WTC11 (cell line): ENCODE measurements at regions of chr22 and their contacts with region 1.

Region 1: DNA sequence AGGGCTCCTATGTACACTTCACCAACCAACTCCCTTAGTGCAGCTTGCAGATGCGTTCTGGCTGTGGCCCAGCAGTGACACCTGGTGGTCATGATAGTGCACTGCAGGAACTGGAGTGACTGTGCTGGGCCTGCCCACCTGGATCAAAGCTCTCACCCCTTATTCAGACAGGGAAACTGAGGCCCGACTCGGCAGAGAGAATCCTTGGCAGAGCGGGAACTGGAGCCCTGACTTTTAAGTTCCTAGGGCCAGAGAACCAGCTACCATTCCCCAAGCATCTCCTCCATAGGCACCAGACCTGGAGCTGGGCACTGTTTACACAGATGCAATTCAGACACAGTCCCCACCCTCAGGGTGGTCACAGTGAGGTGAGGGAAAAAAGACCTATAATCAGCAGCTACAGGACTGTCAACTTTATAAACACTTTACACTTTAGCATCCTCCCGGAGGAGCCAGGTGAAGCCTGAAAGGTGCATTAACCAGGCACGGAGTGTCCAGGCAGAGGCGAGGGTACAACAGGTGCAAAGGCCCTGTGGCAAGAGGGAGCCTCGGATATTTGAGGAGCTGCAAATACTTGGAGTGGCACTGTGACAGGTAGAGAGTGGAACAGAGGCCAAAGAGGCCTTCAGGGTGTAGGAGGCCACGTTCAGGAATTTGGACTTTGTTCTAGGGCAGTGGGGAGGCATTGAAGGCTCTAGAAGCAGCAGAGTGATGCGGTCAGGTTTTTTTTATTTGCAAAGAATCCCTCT is 22.0 kb downstream of the RHBDD3 start:
- DNase-seq: peak; percentile 80
- ATAC-seq: peak; percentile 95
- H3K4me3 Mint-ChIP-seq: no peak overlapping the region
- H3K27ac Mint-ChIP-seq: no peak overlapping the region
- H3K4me1 Mint-ChIP-seq: no peaks in the 10 kb centered on the region
- H3K27me3 Mint-ChIP-seq: peaks cover 16% of the 10 kb centered on the region
- CTCF ChIP-seq: peak; percentile 99

Region 2: DNA sequence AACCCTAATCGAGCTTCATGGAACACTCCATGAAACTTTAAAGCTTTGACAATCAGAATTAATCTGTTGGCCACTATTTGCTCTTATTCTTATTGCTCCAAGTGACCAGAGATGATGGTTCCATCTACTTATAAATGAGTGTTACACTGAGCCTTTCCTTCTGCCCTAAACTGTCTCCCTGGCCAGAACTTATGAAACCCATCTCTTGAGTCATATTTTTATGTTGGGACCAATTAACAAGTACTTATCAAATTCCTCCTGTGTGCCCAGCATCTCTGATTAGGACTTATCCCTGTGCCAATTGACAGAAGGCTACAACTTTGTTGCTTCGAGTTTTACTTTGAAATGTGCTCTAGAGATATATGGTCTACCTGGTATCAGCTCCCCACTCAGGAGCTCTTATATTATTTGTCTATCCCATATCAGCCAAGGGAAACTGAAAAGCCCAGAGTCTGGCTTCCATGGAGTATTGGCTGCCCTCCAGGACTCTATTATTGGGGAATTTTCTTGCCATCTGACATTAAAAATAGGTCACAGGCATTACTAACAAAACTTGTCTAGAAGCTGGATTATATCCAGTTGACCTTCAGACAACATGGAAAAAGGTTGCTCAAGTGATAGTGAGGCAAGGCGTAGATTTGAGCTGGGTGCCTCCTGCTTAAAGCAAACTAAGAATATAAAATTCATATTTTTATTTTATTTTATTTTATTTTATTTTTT is 164.1 kb before region 1 on chr22:
- CTCF ChIA-PET with region 1: interaction called, 18 read pairs
- POLR2A ChIA-PET with region 1: no interaction called
- DNase-seq: no peak
- ATAC-seq: no peak
- H3K4me3 Mint-ChIP-seq: no peak overlapping the region
- H3K27ac Mint-ChIP-seq: no peak overlapping the region
- H3K4me1 Mint-ChIP-seq: peaks cover 32% of the 10 kb centered on the region
- H3K27me3 Mint-ChIP-seq: no peaks in the 10 kb centered on the region
- CTCF ChIP-seq: no peak

Region 3: DNA sequence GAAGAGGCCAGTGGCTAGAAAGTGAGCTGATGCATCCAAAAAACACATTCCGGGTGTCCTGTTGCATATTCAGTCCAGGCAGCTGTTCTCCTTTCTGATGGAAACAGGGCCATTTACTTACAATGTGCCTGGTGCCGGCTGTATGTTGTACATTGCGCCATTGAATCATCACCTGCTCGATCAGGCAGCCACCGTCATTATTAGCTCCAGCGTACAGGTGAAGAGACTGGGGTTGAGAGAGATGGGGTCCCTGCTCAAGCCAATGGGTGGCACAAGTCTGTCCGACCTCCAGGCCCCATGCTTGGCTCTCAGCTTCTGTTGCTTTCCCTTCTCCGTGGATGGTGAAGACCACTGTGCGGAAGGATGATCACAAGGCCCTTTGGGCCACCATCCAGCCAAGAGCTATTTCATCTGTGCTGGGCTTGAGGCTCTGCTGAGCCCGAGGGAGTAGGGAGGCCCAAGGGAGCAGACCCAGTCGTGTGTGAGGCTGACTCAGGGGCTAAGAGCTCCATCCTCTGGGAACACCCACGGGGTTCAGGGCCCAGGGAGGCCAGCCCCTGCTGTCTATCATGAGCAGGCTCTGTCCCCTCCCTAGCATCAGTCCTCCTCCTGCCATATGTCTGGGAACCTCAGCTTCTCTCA is 60.8 kb before region 1 on chr22:
- CTCF ChIA-PET with region 1: interaction called, 18 read pairs
- POLR2A ChIA-PET with region 1: no interaction called
- DNase-seq: no peak
- ATAC-seq: no peak
- H3K4me3 Mint-ChIP-seq: no peak overlapping the region
- H3K27ac Mint-ChIP-seq: no peak overlapping the region; the same call in 1 of the 2 replicates
- H3K4me1 Mint-ChIP-seq: peaks cover 10% of the 10 kb centered on the region
- H3K27me3 Mint-ChIP-seq: no peaks in the 10 kb centered on the region
- CTCF ChIP-seq: no peak

Region 4: DNA sequence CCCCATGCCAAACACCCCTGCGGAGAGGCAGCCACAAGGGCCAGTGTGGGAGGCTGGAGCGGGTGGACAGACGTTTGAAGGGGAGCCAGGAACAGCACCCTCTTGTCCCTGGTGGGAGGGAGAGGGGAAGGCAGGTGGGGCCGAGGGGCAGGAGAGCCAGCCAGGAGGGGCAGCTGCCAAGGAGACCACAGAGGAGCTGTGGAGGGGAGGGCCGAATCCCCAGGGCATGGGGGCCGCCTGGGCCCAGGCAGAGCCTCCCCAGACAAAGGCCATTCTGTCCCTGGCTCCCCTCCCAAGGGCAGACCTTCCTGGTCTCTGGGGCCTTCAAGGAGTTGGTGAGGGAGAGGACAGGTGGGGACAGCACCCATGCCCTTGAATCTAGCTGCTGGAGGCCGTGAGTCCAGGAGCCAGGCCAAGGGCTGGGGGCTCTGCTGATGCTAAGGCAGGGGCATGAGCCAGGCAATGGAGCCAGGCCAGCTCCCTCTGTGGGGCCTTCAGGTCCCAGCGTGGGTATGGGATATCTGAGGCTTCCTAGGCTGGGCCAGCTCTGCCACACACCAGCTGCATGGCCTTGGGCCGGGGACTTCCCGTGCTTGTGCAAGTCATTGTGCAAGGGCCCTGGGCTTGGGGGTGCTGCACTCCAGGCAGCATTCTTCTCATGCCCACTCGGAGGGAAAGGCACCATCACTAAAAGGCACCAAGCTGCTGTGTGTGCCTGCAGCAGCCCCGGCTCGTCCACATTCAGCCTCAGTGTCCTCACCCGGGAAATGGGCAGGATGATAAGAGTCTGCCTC is 28.7 kb before region 1 on chr22:
- CTCF ChIA-PET with region 1: interaction called, 17 read pairs
- POLR2A ChIA-PET with region 1: no interaction called
- DNase-seq: no peak
- ATAC-seq: no peak
- H3K4me3 Mint-ChIP-seq: no peak overlapping the region
- H3K27ac Mint-ChIP-seq: no peak overlapping the region
- H3K4me1 Mint-ChIP-seq: peaks cover 26% of the 10 kb centered on the region
- H3K27me3 Mint-ChIP-seq: no peaks in the 10 kb centered on the region
- CTCF ChIP-seq: no peak

Region 5: GRCh38 chr22:29259253-29259899 is 13.6 kb after region 1 on chr22:
- CTCF ChIA-PET with region 1: interaction called, 52 read pairs
- POLR2A ChIA-PET with region 1: interaction called, 12 read pairs
- DNase-seq: peak; percentile 39
- ATAC-seq: peak; percentile 80
- H3K4me3 Mint-ChIP-seq: no peak overlapping the region
- H3K27ac Mint-ChIP-seq: 0 out of 2 replicates have a peak overlapping the region, but pooled peaks have one; percentile 25
- H3K4me1 Mint-ChIP-seq: no peaks in the 10 kb centered on the region
- H3K27me3 Mint-ChIP-seq: no peaks in the 10 kb centered on the region
- CTCF ChIP-seq: no peak

Region 6: GRCh38 chr22:29288837-29289236 is 43.0 kb after region 1 on chr22:
- CTCF ChIA-PET with region 1: no interaction called
- POLR2A ChIA-PET with region 1: no interaction called
- DNase-seq: no peak
- ATAC-seq: no peak
- H3K4me3 Mint-ChIP-seq: no peak overlapping the region
- H3K27ac Mint-ChIP-seq: peak overlapping the region; percentile 82; the same call in 1 of the 2 replicates
- H3K4me1 Mint-ChIP-seq: no peaks in the 10 kb centered on the region
- H3K27me3 Mint-ChIP-seq: no peaks in the 10 kb centered on the region
- CTCF ChIP-seq: no peak

Region 7: DNA sequence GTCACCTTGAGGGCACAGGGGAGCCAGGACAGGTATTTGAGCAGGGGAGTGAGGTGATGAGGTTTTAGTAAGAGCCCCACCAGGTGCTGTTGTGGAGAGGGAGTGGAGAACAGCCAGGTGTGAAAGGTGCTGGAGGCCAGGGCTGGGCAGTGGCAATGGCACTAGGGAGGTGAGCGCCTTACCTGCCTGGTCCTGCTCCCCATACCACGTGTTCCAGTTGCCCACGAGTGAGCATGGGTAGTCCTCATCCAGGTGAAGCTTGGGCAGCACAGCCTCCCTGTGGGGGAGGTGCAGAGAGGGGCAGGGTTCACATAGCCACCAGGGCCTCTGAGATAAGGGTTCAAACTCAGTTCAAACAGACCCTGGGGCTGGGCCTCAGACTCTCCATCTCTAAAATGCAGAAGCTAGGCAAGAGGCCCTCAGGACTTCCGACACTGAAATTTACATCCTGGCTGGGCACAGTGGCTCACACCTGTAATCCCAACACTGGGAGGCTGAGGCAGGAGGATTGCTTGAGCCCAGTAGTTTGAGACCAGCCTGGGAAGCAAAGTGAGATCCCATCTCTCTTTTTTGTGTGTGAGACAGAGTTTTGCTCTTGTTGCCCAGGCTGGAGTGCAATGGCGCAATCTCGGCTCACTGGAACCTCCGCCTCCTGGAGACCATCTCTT is 323.3 kb after region 1 on chr22:
- CTCF ChIA-PET with region 1: no interaction called
- POLR2A ChIA-PET with region 1: no interaction called
- DNase-seq: no peak
- ATAC-seq: no peak
- H3K4me3 Mint-ChIP-seq: no peak overlapping the region
- H3K27ac Mint-ChIP-seq: no peak overlapping the region
- H3K4me1 Mint-ChIP-seq: no peaks in the 10 kb centered on the region
- H3K27me3 Mint-ChIP-seq: no peaks in the 10 kb centered on the region
- CTCF ChIP-seq: no peak